ENCODE measurements at regions of chr9 and their contacts with region 1.

Region 1: DNA sequence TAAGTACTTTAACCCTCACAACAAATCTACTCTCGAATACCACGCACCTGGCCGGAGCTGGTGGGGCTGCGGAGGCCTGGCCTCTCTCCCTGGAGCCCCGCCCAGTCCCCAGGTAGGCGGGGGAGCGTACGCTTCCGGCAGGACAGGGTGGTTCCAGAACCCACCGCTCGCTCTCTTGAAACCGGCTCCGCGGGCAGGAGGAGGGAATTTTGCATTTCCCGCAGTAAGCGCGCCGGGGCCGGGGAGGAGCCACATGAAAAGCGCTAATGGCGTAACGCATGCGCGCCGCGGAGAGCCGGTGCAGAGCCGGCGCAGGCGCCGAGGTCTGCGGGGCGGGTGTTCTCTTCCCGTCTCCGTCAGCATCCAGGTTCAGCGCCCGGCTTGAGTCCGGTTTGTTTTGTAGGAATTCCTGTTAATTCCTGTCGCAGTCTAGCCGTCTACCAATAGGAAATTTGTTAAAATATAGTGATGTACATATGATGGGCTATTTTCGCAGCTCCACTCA is 20.8 kb downstream of the CAVIN4 start:
- DNase-seq: peak; percentile 73
- H3K4me3 Mint-ChIP-seq: peak overlapping the region; percentile 69
- H3K27ac Mint-ChIP-seq: no peak overlapping the region
- H3K4me1 Mint-ChIP-seq: peaks cover 16% of the 10 kb centered on the region
- H3K27me3 Mint-ChIP-seq: peaks cover 14% of the 10 kb centered on the region
- CTCF ChIP-seq: no peak

Region 2: DNA sequence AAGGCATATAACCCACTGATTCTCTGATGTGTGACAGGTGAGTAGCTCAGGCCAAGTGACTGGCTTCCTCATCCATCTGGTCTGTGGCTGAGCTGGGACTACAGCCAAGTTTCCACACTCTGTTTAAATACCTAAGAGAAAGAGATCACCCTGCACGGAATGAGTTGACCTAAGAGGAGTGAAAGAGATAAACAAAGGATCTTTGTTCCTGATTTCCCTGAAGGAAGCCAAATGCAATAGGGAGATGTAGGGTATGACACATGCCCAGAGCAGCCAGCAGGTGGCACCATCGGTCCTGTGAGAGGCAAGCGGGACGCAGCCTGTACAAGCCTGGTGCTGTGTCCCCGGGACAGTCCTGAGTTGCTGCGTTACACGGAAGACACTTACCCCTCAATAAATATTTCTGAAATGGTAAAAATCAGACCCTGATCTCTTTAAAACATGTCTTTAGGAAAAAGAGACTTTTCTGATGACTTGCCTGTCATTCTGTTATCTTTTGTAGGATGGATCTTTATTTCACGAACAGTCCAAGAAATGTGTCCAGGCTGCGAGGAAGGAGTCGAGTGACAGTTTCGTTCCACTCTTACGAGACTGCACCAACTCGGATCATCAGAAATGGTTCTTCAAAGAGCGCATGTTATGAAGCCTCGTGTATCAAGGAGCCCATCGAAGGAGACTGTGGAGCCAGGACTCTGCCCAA is 1750.1 kb before region 1 on chr9:
- CTCF ChIA-PET with region 1: interaction called, 3 read pairs
- POLR2A ChIA-PET with region 1: no interaction called
- intact Hi-C with region 1: loop called (anchors 5 kb)
- DNase-seq: peak; percentile 80
- H3K4me3 Mint-ChIP-seq: no peak overlapping the region
- H3K27ac Mint-ChIP-seq: no peak overlapping the region
- H3K4me1 Mint-ChIP-seq: peaks cover 10% of the 10 kb centered on the region
- H3K27me3 Mint-ChIP-seq: peaks cover 32% of the 10 kb centered on the region
- CTCF ChIP-seq: peak; percentile 87

Region 3: GRCh38 chr9:100160021-100160420 is 438.7 kb before region 1 on chr9:
- CTCF ChIA-PET with region 1: no interaction called
- POLR2A ChIA-PET with region 1: no interaction called
- intact Hi-C with region 1: no loop called
- DNase-seq: no peak
- H3K4me3 Mint-ChIP-seq: no peak overlapping the region
- H3K27ac Mint-ChIP-seq: no peak overlapping the region
- H3K4me1 Mint-ChIP-seq: no peaks in the 10 kb centered on the region
- H3K27me3 Mint-ChIP-seq: no peaks in the 10 kb centered on the region
- CTCF ChIP-seq: no peak

Region 4: DNA sequence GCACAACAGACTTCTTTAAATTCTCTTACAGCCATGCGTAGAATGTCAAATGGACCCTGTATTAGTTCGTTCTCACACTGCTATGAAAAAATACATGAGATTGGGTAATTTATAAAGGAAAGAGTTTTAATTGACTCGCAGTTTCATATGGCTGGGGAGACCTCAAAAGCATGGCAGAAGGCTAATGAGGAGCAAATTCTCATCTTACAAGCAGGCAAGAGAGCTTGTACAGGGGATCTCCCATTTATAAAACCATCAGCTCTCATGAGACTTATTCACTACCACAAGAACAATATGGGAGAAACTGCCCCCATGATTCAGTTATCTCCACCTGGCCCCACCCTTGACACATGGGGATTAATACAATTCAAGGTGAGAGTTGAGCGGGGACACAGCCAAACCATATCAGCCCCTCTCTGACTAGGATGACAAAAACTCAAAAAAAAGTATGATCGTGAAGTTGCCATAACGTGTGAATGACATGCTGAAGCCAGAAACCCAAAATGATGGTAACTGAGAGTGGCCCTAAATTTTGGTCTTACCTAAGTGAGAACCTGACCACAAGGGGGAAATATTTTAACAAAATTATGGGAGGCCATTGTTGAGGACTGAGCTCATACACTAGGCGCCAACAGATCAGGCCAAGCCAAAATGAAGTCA is 228.5 kb before region 1 on chr9:
- CTCF ChIA-PET with region 1: interaction called, 3 read pairs
- POLR2A ChIA-PET with region 1: no interaction called
- intact Hi-C with region 1: loop called (anchors 5 kb)
- DNase-seq: no peak
- H3K4me3 Mint-ChIP-seq: no peak overlapping the region
- H3K27ac Mint-ChIP-seq: no peak overlapping the region
- H3K4me1 Mint-ChIP-seq: peaks cover 6% of the 10 kb centered on the region
- H3K27me3 Mint-ChIP-seq: no peaks in the 10 kb centered on the region
- CTCF ChIP-seq: peak; percentile 9

Region 5: GRCh38 chr9:100581661-100582060 is 17.0 kb before region 1 on chr9:
- CTCF ChIA-PET with region 1: interaction called, 29 read pairs
- POLR2A ChIA-PET with region 1: no interaction called
- intact Hi-C with region 1: no loop called
- DNase-seq: no peak
- H3K4me3 Mint-ChIP-seq: no peak overlapping the region
- H3K27ac Mint-ChIP-seq: no peak overlapping the region
- H3K4me1 Mint-ChIP-seq: no peaks in the 10 kb centered on the region
- H3K27me3 Mint-ChIP-seq: no peaks in the 10 kb centered on the region
- CTCF ChIP-seq: no peak

Region 6: DNA sequence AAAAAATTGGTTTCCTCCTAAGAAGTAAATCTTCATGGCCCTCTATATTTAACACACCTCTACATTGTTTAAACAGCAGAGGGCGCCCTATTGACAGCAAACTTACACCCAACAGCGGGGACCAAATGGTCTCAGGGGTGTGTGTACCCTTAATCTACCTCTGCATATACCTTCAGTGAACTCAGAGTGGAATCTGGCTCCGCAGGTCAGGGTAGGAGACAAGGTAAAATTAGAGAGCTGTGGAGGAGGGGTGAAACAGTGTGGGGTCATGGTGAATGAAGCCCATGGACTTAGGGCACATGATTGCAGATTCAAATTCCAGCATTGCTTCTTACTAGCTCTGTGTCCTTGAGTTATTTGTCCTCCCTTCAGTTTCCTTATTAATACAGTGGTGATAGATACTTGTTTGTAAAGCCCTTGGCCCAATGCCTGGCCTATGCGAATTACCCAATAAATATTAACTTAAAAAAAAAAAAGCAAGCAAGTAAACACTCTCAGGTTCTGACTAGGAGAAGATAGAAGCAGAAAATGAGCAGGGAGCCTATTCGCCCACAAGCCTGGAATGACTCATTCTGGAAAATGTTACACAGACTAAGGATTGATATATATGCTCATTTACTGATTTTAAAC is 102.1 kb after region 1 on chr9:
- CTCF ChIA-PET with region 1: interaction called, 15 read pairs
- POLR2A ChIA-PET with region 1: no interaction called
- intact Hi-C with region 1: no loop called
- DNase-seq: peak; percentile 48
- H3K4me3 Mint-ChIP-seq: no peak overlapping the region
- H3K27ac Mint-ChIP-seq: no peak overlapping the region
- H3K4me1 Mint-ChIP-seq: no peaks in the 10 kb centered on the region
- H3K27me3 Mint-ChIP-seq: no peaks in the 10 kb centered on the region
- CTCF ChIP-seq: peak; percentile 41

Region 7: GRCh38 chr9:100848726-100849125 is 250.0 kb after region 1 on chr9:
- CTCF ChIA-PET with region 1: no interaction called
- POLR2A ChIA-PET with region 1: no interaction called
- intact Hi-C with region 1: no loop called
- DNase-seq: peak; percentile 8
- H3K4me3 Mint-ChIP-seq: no peak overlapping the region
- H3K27ac Mint-ChIP-seq: no peak overlapping the region
- H3K4me1 Mint-ChIP-seq: peaks cover 6% of the 10 kb centered on the region
- H3K27me3 Mint-ChIP-seq: peaks cover 4% of the 10 kb centered on the region
- CTCF ChIP-seq: no peak

Region 8: GRCh38 chr9:101235105-101235866 is 636.6 kb after region 1 on chr9:
- CTCF ChIA-PET with region 1: interaction called, 30 read pairs
- POLR2A ChIA-PET with region 1: no interaction called
- intact Hi-C with region 1: loop called (anchors 1 kb)
- DNase-seq: peak; percentile 42
- H3K4me3 Mint-ChIP-seq: no peak overlapping the region
- H3K27ac Mint-ChIP-seq: no peak overlapping the region
- H3K4me1 Mint-ChIP-seq: no peaks in the 10 kb centered on the region
- H3K27me3 Mint-ChIP-seq: peaks cover 2% of the 10 kb centered on the region
- CTCF ChIP-seq: peak; percentile 56